Activated naive CD4-positive, alpha-beta T cell treated with anti-CD3 and anti-CD28 coated beads for 36 hours (primary cell): ENCODE measurements at regions of chr6 and their contacts with region 1.

Region 1: GRCh38 chr6:137736048-137736818 is 130.8 kb upstream of the TNFAIP3 start:
- DNase-seq: peak; percentile 25
- H3K4me3 Mint-ChIP-seq: no peak overlapping the region
- H3K27ac Mint-ChIP-seq: no peak overlapping the region
- H3K4me1 Mint-ChIP-seq: peaks cover 18% of the 10 kb centered on the region
- H3K27me3 Mint-ChIP-seq: peaks cover 2% of the 10 kb centered on the region

Region 2: GRCh38 chr6:137767911-137768690 is 31.9 kb after region 1 on chr6:
- CTCF ChIA-PET with region 1: no interaction called
- intact Hi-C with region 1: loop called (anchors 2 kb)
- DNase-seq: no peak
- H3K4me3 Mint-ChIP-seq: no peak overlapping the region
- H3K27ac Mint-ChIP-seq: peak overlapping the region; percentile 65
- H3K4me1 Mint-ChIP-seq: peaks cover 12% of the 10 kb centered on the region
- H3K27me3 Mint-ChIP-seq: no peaks in the 10 kb centered on the region

Region 3: DNA sequence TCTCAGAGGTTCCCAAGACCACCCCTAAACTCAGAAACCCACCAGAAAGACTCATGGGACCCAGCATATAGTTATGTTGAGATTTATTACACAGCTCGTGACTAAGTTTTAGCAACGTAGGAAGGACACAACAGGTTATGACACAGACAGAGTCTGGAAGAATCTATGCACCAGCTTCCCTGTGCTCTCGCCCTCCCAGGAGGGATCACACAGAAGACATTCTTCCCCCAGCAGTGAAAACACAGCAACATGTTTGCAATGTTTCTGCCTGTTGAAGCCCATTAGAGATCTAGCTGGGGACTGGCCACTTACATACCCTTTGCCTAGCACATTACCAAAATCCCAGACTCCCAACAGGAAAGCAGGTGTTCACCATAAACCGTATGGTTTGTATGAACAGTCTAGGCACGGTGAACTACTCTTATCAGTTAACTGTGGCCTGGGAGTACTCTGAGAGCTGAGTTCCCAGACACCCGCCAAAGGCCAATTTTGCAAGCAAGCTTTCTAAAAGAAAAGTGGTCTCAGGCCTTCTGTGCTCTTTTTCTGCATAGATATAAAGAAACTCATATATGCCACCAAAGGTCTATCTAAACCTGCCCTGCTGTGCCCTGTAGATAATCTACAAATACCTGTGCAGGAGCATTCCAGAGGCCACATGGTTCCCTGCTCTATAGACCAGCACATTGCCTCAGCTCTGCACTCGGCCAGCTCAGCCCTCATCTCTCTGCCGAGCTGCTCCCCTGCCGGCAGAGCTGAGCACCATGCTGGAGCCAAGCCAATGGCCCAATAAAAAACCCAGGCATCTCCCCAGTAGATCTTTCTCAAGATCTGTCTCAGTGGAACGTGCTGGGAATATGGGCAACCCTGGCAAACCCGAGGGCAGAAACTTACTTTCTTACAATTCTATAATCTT is 571.8 kb after region 1 on chr6:
- CTCF ChIA-PET with region 1: no interaction called
- intact Hi-C with region 1: loop called (anchors 10 kb)
- DNase-seq: no peak
- H3K4me3 Mint-ChIP-seq: no peak overlapping the region
- H3K27ac Mint-ChIP-seq: no peak overlapping the region
- H3K4me1 Mint-ChIP-seq: no peaks in the 10 kb centered on the region
- H3K27me3 Mint-ChIP-seq: no peaks in the 10 kb centered on the region

Region 4: DNA sequence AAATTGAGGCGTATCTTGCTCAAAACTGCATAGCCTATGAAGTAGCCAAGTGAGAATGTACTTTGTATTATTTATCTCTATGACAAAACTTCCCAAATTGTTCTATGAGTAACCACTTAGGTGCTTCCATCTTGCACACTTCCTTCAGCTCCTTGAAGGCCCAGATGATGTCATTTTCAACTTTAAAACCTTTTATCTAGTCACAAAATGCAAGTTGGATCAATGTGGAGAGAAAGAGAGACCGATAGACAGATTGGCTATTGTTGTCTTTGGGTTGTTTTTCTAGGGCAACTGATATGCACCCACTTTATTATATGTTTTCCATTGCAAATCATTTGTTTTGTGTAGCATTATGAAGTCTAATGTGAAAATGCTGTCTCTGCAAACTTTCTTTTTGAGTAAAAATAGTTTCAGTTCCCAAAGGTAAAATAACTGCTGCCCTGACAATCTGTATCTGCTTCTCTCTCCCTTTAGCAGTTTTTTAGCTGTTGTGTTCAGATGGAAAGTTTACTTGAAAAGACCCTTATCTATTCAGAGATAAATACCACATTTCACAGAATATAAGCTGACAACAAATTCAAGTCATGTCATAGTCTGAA is 1711.9 kb after region 1 on chr6:
- CTCF ChIA-PET with region 1: no interaction called
- intact Hi-C with region 1: no loop called
- DNase-seq: no peak
- H3K4me3 Mint-ChIP-seq: no peak overlapping the region
- H3K27ac Mint-ChIP-seq: no peak overlapping the region
- H3K4me1 Mint-ChIP-seq: no peaks in the 10 kb centered on the region
- H3K27me3 Mint-ChIP-seq: no peaks in the 10 kb centered on the region